ENCODE measurements at regions of chr17 and their contacts with region 1.

Region 1: DNA sequence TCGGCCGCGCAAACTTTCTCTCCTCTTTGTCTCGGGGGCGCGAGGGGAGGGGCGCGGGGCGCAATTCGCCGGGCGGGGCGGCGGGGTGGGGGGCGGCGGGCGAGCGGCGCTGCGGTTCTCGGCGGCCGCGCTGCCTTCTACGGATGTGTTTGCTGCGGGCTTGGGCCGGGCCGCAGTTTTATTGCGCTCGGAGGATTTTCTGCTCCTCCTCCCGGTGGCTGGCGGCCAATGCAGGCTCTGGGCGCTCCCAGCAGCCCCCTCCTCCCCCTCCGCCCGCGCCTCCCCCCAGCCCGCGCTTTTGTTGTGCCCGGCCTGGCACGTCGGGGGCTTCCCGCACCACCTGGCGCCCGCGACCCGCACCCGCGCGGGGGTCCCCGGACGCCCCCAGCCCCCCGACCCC is at the start of gene TIMP2:
- DNase-seq: peak; percentile 93
- ATAC-seq: peak; percentile 70
- total RNA-seq, gene TIMP2: 138 TPM

Region 2: DNA sequence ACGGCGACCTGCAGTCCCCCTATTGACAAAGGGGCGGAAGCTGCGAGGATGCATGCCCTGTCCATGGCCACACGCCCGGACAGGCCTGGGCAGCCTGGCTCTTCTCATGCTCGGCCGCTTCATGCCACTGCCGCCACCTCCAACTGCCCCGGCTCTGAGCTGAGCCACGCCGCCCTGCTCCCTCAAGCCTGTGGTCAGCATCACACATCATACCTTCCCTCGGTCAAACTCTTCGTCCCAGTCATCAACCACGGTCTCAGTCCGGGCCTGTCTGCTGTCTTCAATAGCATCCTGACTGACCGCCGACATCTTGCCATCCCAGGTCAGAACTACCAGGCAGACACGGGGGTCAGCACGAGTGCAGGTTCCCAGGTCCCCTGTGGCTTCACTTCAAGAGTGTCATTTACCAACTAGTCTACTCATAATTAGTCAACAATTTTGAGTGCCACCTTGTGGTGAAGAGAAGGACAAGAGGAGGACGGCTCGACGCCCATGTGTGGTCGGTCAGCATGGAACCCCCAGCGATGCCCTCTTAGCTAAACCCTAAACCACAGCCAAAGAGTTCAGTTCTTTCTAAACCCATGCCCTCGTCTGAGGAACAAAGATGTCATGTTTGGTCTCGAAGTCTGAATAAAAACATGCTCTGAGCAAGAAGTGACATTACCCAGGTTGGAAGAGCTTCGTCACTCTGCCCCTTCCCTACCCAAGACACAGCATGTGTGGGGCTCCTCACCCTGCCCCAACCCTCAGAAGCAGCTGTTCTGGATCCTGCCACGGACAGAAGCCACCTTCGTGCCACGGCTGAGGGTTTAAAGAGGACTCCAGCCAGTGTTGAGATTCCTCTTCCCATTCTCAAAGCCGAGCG is 126.3 kb before region 1 on chr17:
- intact Hi-C with region 1: no loop called
- DNase-seq: no peak
- ATAC-seq: no peak

Region 3: DNA sequence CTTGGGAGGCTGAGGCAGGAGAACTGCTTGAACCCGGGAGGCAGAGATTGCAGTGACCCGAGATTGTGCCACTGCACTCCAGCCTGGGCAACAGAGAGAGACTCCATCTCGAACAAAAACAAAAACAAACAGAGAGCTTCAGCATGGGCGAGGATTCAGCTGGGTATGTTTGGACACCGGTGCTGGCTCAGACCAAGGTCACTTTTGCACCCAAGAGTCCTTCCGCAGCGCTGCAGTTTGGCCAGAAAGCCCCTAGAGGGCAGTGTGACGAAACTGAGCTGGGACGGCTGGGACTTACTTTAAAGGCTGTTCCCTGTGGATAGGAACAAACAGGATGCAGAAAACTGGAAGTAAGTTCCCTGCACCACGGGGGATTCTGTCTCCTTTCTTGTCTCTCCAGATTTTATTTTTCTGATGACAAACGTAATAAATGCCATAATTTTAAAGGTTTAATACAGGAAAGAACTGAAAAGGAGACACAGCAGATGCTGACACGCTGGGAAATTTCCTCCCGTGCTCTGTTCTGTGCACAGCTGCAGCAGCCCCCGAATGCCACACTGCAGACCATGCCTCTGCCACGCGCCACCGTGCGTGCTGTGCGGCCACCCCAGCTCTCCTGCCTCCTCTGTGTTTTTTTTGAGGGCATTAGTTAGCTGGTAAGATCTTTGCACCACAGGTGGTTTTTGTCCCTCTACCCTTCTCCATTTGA is 59.4 kb before region 1 on chr17:
- intact Hi-C with region 1: loop called (anchors 2 kb)
- DNase-seq: peak; percentile 85
- ATAC-seq: peak; percentile 74

Region 4: DNA sequence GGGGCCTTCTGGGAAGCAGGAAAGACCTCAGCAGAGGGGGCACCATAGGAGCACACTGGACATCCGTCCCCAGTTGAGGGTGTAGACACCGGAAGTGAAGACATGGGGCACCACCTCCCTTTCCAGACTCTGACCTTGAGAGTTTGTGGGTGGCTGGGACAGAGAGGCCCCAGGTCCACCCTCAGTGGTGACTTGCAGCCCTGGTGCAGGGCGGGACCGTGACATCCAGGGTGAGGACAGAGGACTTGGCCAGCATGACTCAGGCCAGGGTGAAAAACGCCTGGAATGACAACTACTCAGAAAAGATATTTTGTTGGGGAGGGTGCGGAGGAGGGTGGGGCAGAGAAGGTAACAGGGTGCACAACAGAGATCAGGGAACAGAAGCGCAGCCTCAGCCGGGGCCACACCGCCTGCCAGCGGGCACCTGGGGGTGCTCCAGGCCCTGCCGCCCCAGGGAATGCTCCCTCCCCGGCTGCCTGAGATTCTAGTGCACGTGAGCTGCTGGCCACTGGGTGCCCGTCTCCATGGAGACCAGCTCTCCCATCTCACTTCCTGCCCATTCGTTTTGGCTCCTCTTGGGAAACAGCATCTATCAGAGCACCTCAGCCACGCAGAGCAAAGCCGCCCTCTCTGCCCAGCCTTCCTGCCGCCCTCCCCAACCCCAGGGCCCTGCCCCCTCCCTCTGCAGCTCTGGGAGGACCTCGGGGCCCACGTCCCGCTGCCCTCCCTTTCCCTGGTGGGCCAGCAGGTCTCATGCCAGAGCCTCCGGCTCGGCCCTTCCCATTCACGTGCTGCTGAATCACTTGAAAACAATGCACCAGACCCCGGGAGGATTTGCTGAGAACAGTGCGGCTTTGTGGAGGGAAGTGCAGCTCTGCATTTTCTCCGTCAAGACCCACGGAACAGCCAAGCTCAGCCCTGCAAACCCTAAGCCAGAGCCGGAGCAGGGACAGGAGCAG is 41.8 kb before region 1 on chr17:
- intact Hi-C with region 1: loop called (anchors 5 kb)
- DNase-seq: peak; percentile 90
- ATAC-seq: peak; percentile 77

Region 5: DNA sequence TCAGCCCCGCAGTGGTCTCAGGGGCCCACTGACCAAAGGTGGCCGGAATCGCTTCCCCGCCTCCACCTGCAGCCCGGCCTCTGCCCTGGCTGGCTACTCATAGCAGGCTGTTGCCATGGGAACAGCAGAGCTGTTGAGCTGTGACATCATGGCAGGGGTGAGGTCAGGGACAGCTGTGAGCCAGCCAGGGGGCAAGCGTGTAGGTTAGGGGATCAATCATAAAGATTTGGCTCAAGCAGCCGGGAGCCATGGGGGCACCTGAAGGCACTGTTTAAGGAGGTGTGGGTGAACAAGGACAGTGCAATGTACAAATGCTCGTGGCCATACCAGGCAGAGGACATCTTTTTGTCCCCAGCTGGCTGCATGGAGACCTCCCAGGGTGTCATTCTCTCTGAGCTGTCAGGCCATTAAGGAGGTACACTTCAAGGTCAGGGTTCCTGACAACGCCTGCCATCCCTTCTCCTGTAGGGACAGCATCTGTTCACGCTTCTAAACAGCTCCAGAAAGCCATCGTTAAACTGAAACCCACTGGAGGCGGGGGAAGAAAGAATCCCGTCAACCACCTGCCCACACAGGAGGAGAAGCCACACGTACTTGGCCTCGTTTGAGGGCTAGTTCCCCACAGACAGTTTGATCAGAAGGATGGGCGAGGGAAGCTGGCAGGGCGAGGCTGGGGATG is 22.0 kb before region 1 on chr17 and contains the start of gene CEP295NL:
- intact Hi-C with region 1: loop called (anchors 2 kb)
- DNase-seq: peak; percentile 23
- ATAC-seq: no peak
- total RNA-seq, gene CEP295NL: 0.60 TPM

Region 6: GRCh38 chr17:78970834-78971773 is 45.9 kb after region 1 on chr17:
- intact Hi-C with region 1: loop called (anchors 5 kb)
- DNase-seq: peak; percentile 88
- ATAC-seq: peak; percentile 45

Region 7: GRCh38 chr17:79231766-79232287 is 306.6 kb after region 1 on chr17:
- intact Hi-C with region 1: no loop called
- DNase-seq: no peak
- ATAC-seq: no peak

Measured in Right ventricle myocardium inferior (tissue), 1 donor.